ENCODE measurements at regions of chr20 and their contacts with region 1.

Region 1: GRCh38 chr20:25453035-25453810 is 45.8 kb downstream of the GINS1 start:
- DNase-seq: no peak
- ATAC-seq: peak in 4 of 8 donors; percentile 35 to 70 (median 60)
- H3K4me3 ChIP-seq: no peak overlapping the region
- H3K27ac ChIP-seq: no peak overlapping the region
- H3K4me1 ChIP-seq: peaks cover 0 to 10% (median 0%) of the 10 kb centered on the region in 9 donors
- H3K27me3 ChIP-seq: no peaks in the 10 kb centered on the region
- CTCF ChIP-seq: no peak

Region 2: GRCh38 chr20:25360635-25361286 is 92.5 kb before region 1 on chr20:
- intact Hi-C with region 1: no loop called
- DNase-seq: no peak
- ATAC-seq: peak in 1 of 8 donors; percentile 30
- H3K4me3 ChIP-seq: peak overlapping the region in 1 of 10 donors; percentile 36
- H3K27ac ChIP-seq: peak overlapping the region in 3 of 10 donors; percentile 2 to 79 (median 15)
- H3K4me1 ChIP-seq: peaks cover 0 to 24% (median 10%) of the 10 kb centered on the region in 9 donors
- H3K27me3 ChIP-seq: no peaks in the 10 kb centered on the region
- CTCF ChIP-seq: no peak

Region 3: GRCh38 chr20:25510202-25510601 is 57.0 kb after region 1 on chr20:
- intact Hi-C with region 1: loop called in 1 of 10 experiments (anchors 10 kb)
- DNase-seq: no peak
- ATAC-seq: no peak
- H3K4me3 ChIP-seq: no peak overlapping the region
- H3K27ac ChIP-seq: no peak overlapping the region
- H3K4me1 ChIP-seq: no peaks in the 10 kb centered on the region
- H3K27me3 ChIP-seq: no peaks in the 10 kb centered on the region
- CTCF ChIP-seq: no peak